Left ventricle myocardium inferior (tissue), 1 donor: ENCODE measurements at regions of chr11 and their contacts with region 1.

Region 1: GRCh38 chr11:101860696-101861427 is 53.9 kb upstream of the CEP126 start:
- DNase-seq: no peak
- H3K4me3 ChIP-seq: no peak overlapping the region
- H3K27ac ChIP-seq: no peak overlapping the region
- H3K4me1 ChIP-seq: no peaks in the 10 kb centered on the region
- H3K27me3 ChIP-seq: no peaks in the 10 kb centered on the region
- CTCF ChIP-seq: peak; percentile 83

Region 2: GRCh38 chr11:101974255-101974654 is 113.4 kb after region 1 on chr11:
- intact Hi-C with region 1: loop called (anchors 10 kb)
- DNase-seq: no peak
- H3K4me3 ChIP-seq: no peak overlapping the region
- H3K27ac ChIP-seq: no peak overlapping the region
- H3K4me1 ChIP-seq: no peaks in the 10 kb centered on the region
- H3K27me3 ChIP-seq: no peaks in the 10 kb centered on the region
- CTCF ChIP-seq: no peak

Region 3: GRCh38 chr11:102007567-102008437 is 146.9 kb after region 1 on chr11:
- intact Hi-C with region 1: loop called (anchors 2 kb)
- DNase-seq: no peak
- H3K4me3 ChIP-seq: no peak overlapping the region
- H3K27ac ChIP-seq: no peak overlapping the region
- H3K4me1 ChIP-seq: peaks cover 15% of the 10 kb centered on the region
- H3K27me3 ChIP-seq: no peaks in the 10 kb centered on the region
- CTCF ChIP-seq: peak; percentile 71

Region 4: GRCh38 chr11:102177974-102178631 is 317.2 kb after region 1 on chr11:
- intact Hi-C with region 1: no loop called
- DNase-seq: no peak
- H3K4me3 ChIP-seq: no peak overlapping the region
- H3K27ac ChIP-seq: peak overlapping the region; percentile 34
- H3K4me1 ChIP-seq: peaks cover 15% of the 10 kb centered on the region
- H3K27me3 ChIP-seq: no peaks in the 10 kb centered on the region
- CTCF ChIP-seq: no peak